Activated naive CD4-positive, alpha-beta T cell treated with anti-CD3 and anti-CD28 coated beads for 36 hours (primary cell): ENCODE measurements at regions of chr11 and their contacts with region 1.

Region 1: DNA sequence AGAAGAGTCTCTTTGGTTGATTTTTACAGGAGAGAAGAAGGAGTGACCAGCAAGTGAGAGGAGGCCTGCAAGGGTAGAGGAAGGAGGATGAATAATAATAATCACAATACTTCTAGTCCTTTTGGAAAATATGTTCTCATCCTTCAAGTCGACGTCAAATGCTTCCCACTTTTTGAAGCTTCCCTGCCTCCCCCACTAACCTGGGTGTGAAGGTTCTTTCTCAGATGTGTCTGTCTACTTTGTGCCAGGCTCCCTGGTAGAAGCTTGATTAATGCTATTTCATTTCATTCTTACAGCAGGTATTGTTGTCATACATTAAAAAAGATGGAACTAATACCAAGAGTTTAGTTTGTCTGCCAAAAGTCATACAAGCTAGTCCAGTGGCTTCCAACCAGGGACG is 17.1 kb downstream of the TENM4 start:
- DNase-seq: no peak
- H3K4me3 Mint-ChIP-seq: no peak overlapping the region
- H3K27ac Mint-ChIP-seq: no peak overlapping the region
- H3K4me1 Mint-ChIP-seq: no peaks in the 10 kb centered on the region
- H3K27me3 Mint-ChIP-seq: peaks cover 12% of the 10 kb centered on the region

Region 2: DNA sequence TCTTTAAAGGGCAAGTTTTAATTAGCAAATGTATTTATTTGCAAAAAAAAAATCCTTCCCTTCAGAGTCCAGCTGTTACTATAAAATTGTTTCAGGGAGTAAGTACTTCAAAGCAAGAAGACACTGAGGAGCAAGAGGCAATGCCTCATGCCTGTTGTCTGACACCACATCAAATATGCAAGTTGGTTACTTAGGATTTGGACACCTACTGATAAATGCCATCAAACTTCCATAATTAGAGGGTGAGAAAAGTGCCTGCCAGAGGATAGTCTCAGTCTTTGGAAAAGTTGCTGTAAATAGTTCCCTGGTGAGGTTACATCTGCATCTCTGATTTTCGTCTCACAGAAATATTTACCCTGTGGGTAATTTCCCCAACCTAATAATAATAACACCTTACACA is 21.2 kb after region 1 on chr11:
- CTCF ChIA-PET with region 1: no interaction called
- intact Hi-C with region 1: loop called (anchors 1 kb)
- DNase-seq: no peak
- H3K4me3 Mint-ChIP-seq: no peak overlapping the region
- H3K27ac Mint-ChIP-seq: no peak overlapping the region
- H3K4me1 Mint-ChIP-seq: peaks cover 7% of the 10 kb centered on the region
- H3K27me3 Mint-ChIP-seq: peaks cover 30% of the 10 kb centered on the region

Region 3: GRCh38 chr11:79663012-79663411 is 239.3 kb after region 1 on chr11:
- CTCF ChIA-PET with region 1: no interaction called
- intact Hi-C with region 1: no loop called
- DNase-seq: no peak
- H3K4me3 Mint-ChIP-seq: no peak overlapping the region
- H3K27ac Mint-ChIP-seq: no peak overlapping the region
- H3K4me1 Mint-ChIP-seq: no peaks in the 10 kb centered on the region
- H3K27me3 Mint-ChIP-seq: no peaks in the 10 kb centered on the region